CD8-positive, alpha-beta T cell (primary cell): ENCODE measurements at regions of chr17 and their contacts with region 1.

Region 1: DNA sequence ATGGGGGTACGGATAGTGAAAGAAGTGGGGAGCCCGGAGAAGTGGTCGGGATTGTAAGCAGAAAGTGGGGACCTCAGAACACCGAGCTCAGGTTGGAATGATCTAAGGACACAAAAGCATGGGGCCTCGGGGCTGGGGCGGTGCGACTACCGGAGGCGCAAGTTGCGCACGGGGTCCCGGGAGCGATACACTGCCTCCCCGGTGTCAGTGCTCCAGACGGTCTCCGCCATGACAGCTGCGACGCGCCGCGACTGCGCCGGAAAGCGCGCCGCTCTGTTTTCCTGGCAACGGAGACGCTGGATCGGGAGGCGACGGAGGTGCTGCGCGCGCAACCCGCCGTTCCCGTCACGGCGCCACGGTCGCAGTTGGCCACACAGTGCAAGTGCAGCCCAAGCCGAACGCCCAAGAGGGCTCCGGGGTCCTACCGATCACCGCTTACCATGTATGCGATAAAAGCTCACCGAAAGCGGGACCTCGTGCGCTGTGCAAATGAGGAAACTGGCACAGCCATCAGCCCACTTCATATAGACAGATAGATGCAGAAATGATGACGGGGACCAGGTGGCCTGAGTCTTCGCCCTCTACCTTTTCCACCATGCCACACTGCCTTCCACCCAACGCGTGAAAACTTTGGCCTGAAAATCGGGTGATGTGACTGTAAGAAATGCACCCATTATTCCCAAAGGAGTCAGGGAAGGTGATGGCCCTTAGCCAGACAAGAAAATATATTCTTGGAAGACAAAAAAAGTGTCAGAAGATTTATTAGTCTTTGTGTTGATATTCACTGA is at the start of gene MKS1:
- DNase-seq: peak; percentile 92 to 97 (median 95)
- ATAC-seq: peak; percentile 97
- H3K4me3 ChIP-seq: peak within 1 kb of the TSS; percentile 63 to 91
- H3K4me3 Mint-ChIP-seq: peak within 1 kb of the TSS; percentile 87
- H3K27ac ChIP-seq: peak within 1 kb of the TSS; percentile 82 to 90
- H3K27ac Mint-ChIP-seq: peak within 1 kb of the TSS; percentile 93
- H3K4me1 ChIP-seq: peaks cover 14% of the 10 kb centered on the region
- H3K4me1 Mint-ChIP-seq: peaks cover 23% of the 10 kb centered on the region
- H3K27me3 ChIP-seq: no peaks in the 10 kb centered on the region
- H3K27me3 Mint-ChIP-seq: peaks cover 2% of the 10 kb centered on the region
- CTCF ChIP-seq: peak; percentile 67
- total RNA-seq, gene MKS1: 4.6 to 4.9 TPM

Region 2: GRCh38 chr17:57849874-57850754 is 369.1 kb before region 1 on chr17 and contains the start of gene MRPS23:
- CTCF ChIA-PET with region 1: no interaction called
- POLR2A ChIA-PET with region 1: no interaction called
- intact Hi-C with region 1: loop called (anchors 1 kb)
- DNase-seq: peak; percentile 91 to 99 (median 95)
- ATAC-seq: peak; percentile 94
- H3K4me3 ChIP-seq: peak within 1 kb of the TSS; percentile 74 to 82
- H3K4me3 Mint-ChIP-seq: peak within 1 kb of the TSS; percentile 95
- H3K27ac ChIP-seq: peak within 1 kb of the TSS; percentile 88 to 91
- H3K27ac Mint-ChIP-seq: peak within 1 kb of the TSS; percentile 100
- H3K4me1 ChIP-seq: peaks cover 32% of the 10 kb centered on the region
- H3K4me1 Mint-ChIP-seq: peaks cover 44% of the 10 kb centered on the region
- H3K27me3 ChIP-seq: no peaks in the 10 kb centered on the region
- H3K27me3 Mint-ChIP-seq: no peaks in the 10 kb centered on the region
- CTCF ChIP-seq: no peak
- total RNA-seq, gene MRPS23: 16.2 to 17.2 TPM

Region 3: GRCh38 chr17:58082870-58083490 is 136.2 kb before region 1 on chr17 and contains the start of gene DYNLL2:
- CTCF ChIA-PET with region 1: no interaction called
- POLR2A ChIA-PET with region 1: interaction called, 3 read pairs
- intact Hi-C with region 1: loop called (anchors 1 to 2 kb)
- DNase-seq: peak; percentile 76 to 93 (median 88)
- ATAC-seq: peak; percentile 69
- H3K4me3 ChIP-seq: peak within 1 kb of the TSS; percentile 60 to 62
- H3K4me3 Mint-ChIP-seq: peak within 1 kb of the TSS; percentile 89
- H3K27ac ChIP-seq: peak within 1 kb of the TSS; percentile 81 to 85
- H3K27ac Mint-ChIP-seq: peak within 1 kb of the TSS; percentile 88
- H3K4me1 ChIP-seq: peaks cover 33% of the 10 kb centered on the region
- H3K4me1 Mint-ChIP-seq: peaks cover 33% of the 10 kb centered on the region
- H3K27me3 ChIP-seq: no peaks in the 10 kb centered on the region
- H3K27me3 Mint-ChIP-seq: no peaks in the 10 kb centered on the region
- CTCF ChIP-seq: no peak
- total RNA-seq, gene DYNLL2: 30.5 to 30.6 TPM

Region 4: DNA sequence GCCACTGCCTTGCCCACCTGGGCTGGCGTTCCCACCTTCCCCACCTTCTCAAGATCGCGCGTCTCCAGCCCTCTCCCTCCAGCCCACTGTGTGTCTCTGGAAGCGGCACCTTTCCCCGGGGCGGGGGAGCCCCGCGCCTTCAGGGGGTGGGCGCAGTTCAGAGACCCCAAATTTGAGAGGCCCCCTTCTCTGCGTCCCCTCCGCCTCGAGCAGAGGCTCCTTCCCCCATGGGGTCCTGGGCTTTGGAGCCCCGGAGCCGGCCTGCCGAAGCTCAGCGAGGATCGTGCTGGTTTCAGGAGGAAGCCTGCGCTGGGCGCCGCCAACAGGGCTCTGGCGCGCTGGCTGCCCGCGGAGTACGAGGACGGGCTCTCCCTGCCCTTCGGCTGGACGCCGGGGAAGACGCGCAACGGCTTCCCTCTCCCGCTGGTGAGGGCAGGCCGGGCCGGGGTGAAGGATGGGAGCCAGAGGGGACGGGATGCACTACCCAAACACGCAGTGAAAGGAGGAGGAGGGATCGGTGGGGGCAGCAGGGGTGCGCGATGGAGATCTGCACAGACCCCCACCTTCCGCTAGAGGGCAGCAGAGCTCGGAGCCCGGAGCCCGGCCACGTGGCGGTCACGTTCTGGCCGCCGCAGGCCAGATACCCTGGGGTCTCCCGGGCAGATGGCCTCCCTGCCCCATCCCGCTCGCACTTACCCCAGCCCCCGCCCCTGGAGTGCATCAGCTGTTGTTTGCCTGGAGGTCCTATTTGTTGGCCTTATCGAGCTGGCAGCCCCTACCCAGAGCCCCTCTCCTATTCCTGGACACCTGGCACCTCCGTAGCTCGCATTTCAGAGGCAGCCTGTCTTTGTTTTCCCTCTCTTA is 30.3 kb after region 1 on chr17:
- CTCF ChIA-PET with region 1: interaction called, 7 read pairs
- POLR2A ChIA-PET with region 1: no interaction called
- intact Hi-C with region 1: loop called in 1 of 2 experiments (anchors 1 kb)
- DNase-seq: peak; percentile 51 to 88 (median 74)
- ATAC-seq: peak; percentile 98
- H3K4me3 ChIP-seq: peak overlapping the region; percentile 53 to 59
- H3K4me3 Mint-ChIP-seq: peak overlapping the region; percentile 84
- H3K27ac ChIP-seq: no peak overlapping the region
- H3K27ac Mint-ChIP-seq: no peak overlapping the region
- H3K4me1 ChIP-seq: peaks cover 17% of the 10 kb centered on the region
- H3K4me1 Mint-ChIP-seq: peaks cover 17% of the 10 kb centered on the region
- H3K27me3 ChIP-seq: peaks cover 0 to 5% of the 10 kb centered on the region in 2 experiments
- H3K27me3 Mint-ChIP-seq: peaks cover 8% of the 10 kb centered on the region
- CTCF ChIP-seq: peak; percentile 98

Region 5: DNA sequence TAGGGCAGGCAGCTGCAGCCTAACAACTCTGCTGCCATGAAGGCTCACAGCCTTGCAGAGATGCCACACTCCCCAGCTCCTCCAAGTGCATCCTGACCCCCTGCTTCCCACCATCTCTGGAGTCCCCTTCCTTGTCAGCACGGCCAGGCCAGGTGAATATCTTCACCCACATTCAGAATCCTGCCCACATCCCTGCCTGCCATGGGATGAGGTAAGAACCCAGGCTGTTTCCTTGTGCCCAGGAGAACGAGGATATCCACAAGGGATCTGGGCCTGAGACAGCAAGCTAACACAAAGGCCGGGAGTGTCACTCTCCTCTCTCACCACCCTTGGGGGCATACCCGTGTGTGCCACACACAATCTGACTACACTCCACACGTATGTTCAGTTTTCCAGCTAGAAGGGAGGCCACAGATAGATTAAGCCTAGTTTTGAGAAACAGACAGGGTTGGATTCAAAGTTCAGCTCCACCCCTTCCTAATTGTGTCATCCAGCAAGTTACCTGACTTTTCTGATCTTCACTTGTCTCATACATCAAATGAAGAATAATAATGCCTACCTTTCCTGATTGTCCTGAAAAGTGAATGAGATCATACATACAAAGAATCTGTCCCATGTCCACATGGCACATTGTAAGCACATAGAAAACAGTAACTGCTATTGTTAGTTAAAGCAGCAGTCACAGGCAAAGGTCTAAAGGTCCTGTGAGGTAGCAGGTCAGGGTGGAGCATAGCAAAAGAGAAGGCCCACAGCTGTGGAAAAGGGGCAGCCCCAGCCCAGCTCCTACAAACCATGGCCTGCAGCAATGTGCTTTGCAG is 150.2 kb after region 1 on chr17:
- CTCF ChIA-PET with region 1: no interaction called
- POLR2A ChIA-PET with region 1: no interaction called
- intact Hi-C with region 1: no loop called
- DNase-seq: no peak
- ATAC-seq: no peak
- H3K4me3 ChIP-seq: no peak overlapping the region
- H3K4me3 Mint-ChIP-seq: no peak overlapping the region
- H3K27ac ChIP-seq: peak overlapping the region in 1 of 2 experiments; percentile 55
- H3K27ac Mint-ChIP-seq: no peak overlapping the region
- H3K4me1 ChIP-seq: peaks cover 8% of the 10 kb centered on the region
- H3K4me1 Mint-ChIP-seq: peaks cover 24% of the 10 kb centered on the region
- H3K27me3 ChIP-seq: no peaks in the 10 kb centered on the region
- H3K27me3 Mint-ChIP-seq: no peaks in the 10 kb centered on the region
- CTCF ChIP-seq: no peak

Region 6: DNA sequence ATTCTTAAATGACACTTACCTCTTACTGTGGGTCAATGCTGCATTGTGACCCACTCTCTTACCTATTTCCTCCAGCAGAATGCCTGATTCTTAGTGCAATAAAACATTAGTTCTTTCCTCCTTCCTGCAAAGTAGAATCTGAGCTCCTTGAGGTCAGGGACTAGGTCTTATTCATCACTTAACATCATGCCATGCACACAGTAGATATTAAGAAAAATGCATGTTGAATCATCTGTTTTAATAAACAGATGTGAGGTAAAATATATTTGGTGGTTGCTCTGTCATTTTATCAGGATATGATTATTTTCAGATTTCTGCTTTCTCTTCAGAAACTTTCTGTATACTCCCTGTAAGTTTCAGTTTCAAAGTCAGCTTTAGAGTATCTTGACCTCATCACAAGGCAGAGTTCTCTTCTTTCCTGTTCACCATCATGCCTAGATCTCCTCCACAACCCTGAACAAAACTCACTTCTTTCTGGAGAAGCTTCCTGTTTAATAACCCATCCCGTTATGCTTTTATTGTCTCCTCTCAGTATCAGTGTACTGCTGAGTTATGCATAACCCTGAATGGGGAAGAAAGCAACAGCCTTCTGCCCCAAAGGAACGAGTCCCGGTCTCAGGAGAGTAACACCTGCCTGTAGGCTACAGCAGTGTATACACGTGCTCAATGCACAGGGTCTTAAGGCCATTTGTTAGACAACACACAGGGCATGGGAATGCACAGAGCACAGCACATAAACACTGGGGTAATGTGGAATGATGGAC is 163.1 kb after region 1 on chr17:
- CTCF ChIA-PET with region 1: no interaction called
- POLR2A ChIA-PET with region 1: no interaction called
- intact Hi-C with region 1: no loop called
- DNase-seq: peak in 1 of 9 experiments; percentile 17
- ATAC-seq: no peak
- H3K4me3 ChIP-seq: no peak overlapping the region
- H3K4me3 Mint-ChIP-seq: no peak overlapping the region
- H3K27ac ChIP-seq: peak overlapping the region in 1 of 2 experiments; percentile 69
- H3K27ac Mint-ChIP-seq: peak overlapping the region; percentile 76
- H3K4me1 ChIP-seq: peaks cover 32% of the 10 kb centered on the region
- H3K4me1 Mint-ChIP-seq: peaks cover 44% of the 10 kb centered on the region
- H3K27me3 ChIP-seq: no peaks in the 10 kb centered on the region
- H3K27me3 Mint-ChIP-seq: no peaks in the 10 kb centered on the region
- CTCF ChIP-seq: no peak

Region 7: GRCh38 chr17:58587702-58588254 is 368.6 kb after region 1 on chr17:
- CTCF ChIA-PET with region 1: no interaction called
- POLR2A ChIA-PET with region 1: no interaction called
- intact Hi-C with region 1: no loop called
- DNase-seq: peak; percentile 30 to 78 (median 58)
- ATAC-seq: peak; percentile 92
- H3K4me3 ChIP-seq: no peak overlapping the region
- H3K4me3 Mint-ChIP-seq: no peak overlapping the region
- H3K27ac ChIP-seq: no peak overlapping the region
- H3K27ac Mint-ChIP-seq: no peak overlapping the region
- H3K4me1 ChIP-seq: no peaks in the 10 kb centered on the region
- H3K4me1 Mint-ChIP-seq: no peaks in the 10 kb centered on the region
- H3K27me3 ChIP-seq: no peaks in the 10 kb centered on the region
- H3K27me3 Mint-ChIP-seq: no peaks in the 10 kb centered on the region
- CTCF ChIP-seq: peak; percentile 96

Region 8: GRCh38 chr17:58631523-58632323 is 412.5 kb after region 1 on chr17:
- CTCF ChIA-PET with region 1: no interaction called
- POLR2A ChIA-PET with region 1: no interaction called
- intact Hi-C with region 1: loop called in 1 of 2 experiments (anchors 2 kb)
- DNase-seq: peak; percentile 84 to 97 (median 91)
- ATAC-seq: peak; percentile 88
- H3K4me3 ChIP-seq: peak overlapping the region; percentile 48 to 50
- H3K4me3 Mint-ChIP-seq: no peak overlapping the region
- H3K27ac ChIP-seq: peak overlapping the region; percentile 95 to 97
- H3K27ac Mint-ChIP-seq: no peak overlapping the region
- H3K4me1 ChIP-seq: peaks cover 13% of the 10 kb centered on the region
- H3K4me1 Mint-ChIP-seq: peaks cover 2% of the 10 kb centered on the region
- H3K27me3 ChIP-seq: no peaks in the 10 kb centered on the region
- H3K27me3 Mint-ChIP-seq: no peaks in the 10 kb centered on the region
- CTCF ChIP-seq: no peak